Astrocyte of the cerebellum (primary cell): ENCODE measurements at regions of chr14 and their contacts with region 1.

Region 1: GRCh38 chr14:98022541-98023520 is 1225.6 kb downstream of the VRK1 start:
- DNase-seq: no peak
- H3K4me3 ChIP-seq: no peak overlapping the region
- CTCF ChIP-seq: no peak

Region 2: DNA sequence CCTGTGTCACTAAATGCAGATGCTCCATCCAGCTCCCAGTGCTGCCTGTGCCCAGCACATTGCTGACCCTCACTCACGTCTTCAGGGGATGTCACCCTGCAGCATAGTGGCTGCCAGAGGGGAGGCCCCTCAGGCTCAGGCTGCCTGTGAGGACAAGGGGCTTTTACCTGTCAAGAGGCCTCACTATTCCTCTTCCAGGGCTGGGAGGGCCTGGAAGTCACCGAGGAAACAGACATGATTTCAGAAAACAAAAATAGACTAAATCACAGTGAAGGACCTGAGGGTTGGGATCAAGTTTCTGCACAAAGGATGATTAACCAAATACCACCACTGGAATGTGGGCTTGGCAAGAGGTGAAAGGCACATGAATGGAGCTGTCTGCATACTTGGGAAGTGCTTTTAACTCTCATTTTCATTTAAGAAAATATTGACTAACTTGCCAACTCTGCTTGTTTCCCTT is 46.9 kb after region 1 on chr14:
- in situ Hi-C with region 1: loop called (anchors 5 kb)
- DNase-seq: peak; percentile 91
- H3K4me3 ChIP-seq: no peak overlapping the region
- CTCF ChIP-seq: no peak